ENCODE measurements at regions of chr2 and their contacts with region 1.

Region 1: DNA sequence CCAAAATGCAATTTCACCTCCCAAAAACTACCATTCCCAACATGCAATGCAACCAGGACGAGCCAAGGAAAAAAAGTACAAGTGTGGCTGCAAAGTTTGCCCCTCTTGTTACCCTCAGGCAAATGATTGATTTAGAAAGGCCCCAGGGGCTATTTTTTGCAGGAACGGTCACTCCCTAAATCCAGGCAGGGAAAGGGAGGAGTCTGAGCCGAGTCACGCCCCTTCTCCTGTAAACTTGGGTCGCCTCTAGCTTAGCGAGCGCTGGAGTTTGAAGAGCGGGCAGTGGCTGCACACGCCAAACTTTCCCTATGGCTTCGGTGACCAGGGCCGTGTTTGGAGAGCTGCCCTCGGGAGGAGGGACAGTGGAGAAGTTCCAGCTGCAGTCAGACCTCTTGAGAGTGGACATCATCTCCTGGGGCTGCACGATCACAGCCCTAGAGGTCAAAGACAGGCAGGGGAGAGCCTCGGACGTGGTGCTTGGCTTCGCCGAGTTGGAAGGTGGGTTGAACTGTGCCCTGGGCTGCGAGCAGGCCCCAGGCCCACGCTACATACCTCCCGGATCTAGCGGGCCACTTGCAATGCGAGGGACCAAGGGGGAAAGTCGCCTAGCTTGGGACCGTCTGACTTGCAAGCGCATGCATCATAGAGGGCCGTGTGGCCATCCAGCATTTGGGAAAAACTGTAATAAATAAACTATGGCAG is at the start of gene GALM:
- DNase-seq: peak; percentile 17 to 76 (median 55)
- H3K4me3 ChIP-seq: peak within 1 kb of the TSS; percentile 88
- H3K4me3 Mint-ChIP-seq: peak within 1 kb of the TSS; percentile 82 to 95 (median 88)
- H3K27ac ChIP-seq: peak within 1 kb of the TSS; percentile 60
- H3K27ac Mint-ChIP-seq: peak within 1 kb of the TSS; percentile 91 to 100 (median 99)
- H3K4me1 ChIP-seq: peaks cover 37% of the 10 kb centered on the region
- H3K4me1 Mint-ChIP-seq: peaks cover 56 to 69% (median 66%) of the 10 kb centered on the region in 3 donors
- H3K27me3 ChIP-seq: no peaks in the 10 kb centered on the region
- H3K27me3 Mint-ChIP-seq: no peaks in the 10 kb centered on the region
- total RNA-seq, gene GALM: 107 to 109 TPM

Region 2: GRCh38 chr2:38653715-38654527 is 12.1 kb before region 1 on chr2:
- CTCF ChIA-PET with region 1: interaction called, 18 read pairs
- POLR2A ChIA-PET with region 1: interaction called, 13 read pairs
- DNase-seq: peak in 4 of 5 donors; percentile 25 to 65 (median 34)
- H3K4me3 ChIP-seq: peak overlapping the region; percentile 13
- H3K4me3 Mint-ChIP-seq: peak overlapping the region; percentile 1 to 87 (median 70)
- H3K27ac ChIP-seq: peak overlapping the region; percentile 20
- H3K27ac Mint-ChIP-seq: peak overlapping the region; percentile 85 to 98 (median 94)
- H3K4me1 ChIP-seq: peaks cover 29% of the 10 kb centered on the region
- H3K4me1 Mint-ChIP-seq: peaks cover 30 to 59% (median 51%) of the 10 kb centered on the region in 3 donors
- H3K27me3 ChIP-seq: no peaks in the 10 kb centered on the region
- H3K27me3 Mint-ChIP-seq: no peaks in the 10 kb centered on the region

Region 3: GRCh38 chr2:38685116-38685735 is 19.2 kb after region 1 on chr2:
- CTCF ChIA-PET with region 1: interaction called, 16 read pairs
- POLR2A ChIA-PET with region 1: interaction called, 25 read pairs
- DNase-seq: no peak
- H3K4me3 ChIP-seq: no peak overlapping the region
- H3K4me3 Mint-ChIP-seq: peak overlapping the region in 6 of 7 donors; percentile 29 to 61 (median 46)
- H3K27ac ChIP-seq: no peak overlapping the region
- H3K27ac Mint-ChIP-seq: peak overlapping the region; percentile 61 to 97 (median 89)
- H3K4me1 ChIP-seq: peaks cover 30% of the 10 kb centered on the region
- H3K4me1 Mint-ChIP-seq: peaks cover 37 to 70% (median 69%) of the 10 kb centered on the region in 3 donors
- H3K27me3 ChIP-seq: no peaks in the 10 kb centered on the region
- H3K27me3 Mint-ChIP-seq: no peaks in the 10 kb centered on the region

Region 4: DNA sequence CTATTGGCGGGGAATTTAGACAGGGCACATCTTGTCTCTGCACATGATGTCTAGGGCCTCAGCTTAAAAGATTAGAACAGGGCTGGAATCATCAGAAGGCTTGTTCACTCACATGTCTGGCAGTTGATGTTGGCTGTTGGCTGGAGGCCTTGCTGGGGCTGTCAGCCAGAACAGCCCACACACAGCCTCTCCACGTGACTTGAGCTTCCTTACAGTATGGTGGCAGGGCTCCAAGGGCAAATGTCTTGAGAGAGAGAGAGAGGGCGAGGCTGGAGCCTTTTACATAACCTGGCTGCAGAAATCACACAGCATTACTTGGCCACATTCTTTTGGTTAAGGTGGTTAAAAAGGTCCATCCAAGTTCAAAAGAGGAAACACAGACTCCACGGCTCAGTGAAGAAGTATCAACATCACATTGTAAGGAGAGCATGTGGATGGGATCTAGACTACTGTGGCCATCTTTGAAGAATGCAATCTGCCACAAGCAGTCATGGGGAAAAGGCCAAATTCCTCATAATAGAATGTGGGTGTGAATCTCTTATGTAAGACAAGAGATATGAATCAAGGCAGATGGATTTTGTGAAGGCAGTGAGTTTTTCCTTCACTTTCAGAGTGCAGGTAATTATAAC is 54.7 kb after region 1 on chr2:
- CTCF ChIA-PET with region 1: interaction called, 11 read pairs
- POLR2A ChIA-PET with region 1: interaction called, 3 read pairs
- DNase-seq: no peak
- H3K4me3 ChIP-seq: no peak overlapping the region
- H3K4me3 Mint-ChIP-seq: peak overlapping the region in 3 of 7 donors; percentile 4 to 12 (median 6)
- H3K27ac ChIP-seq: no peak overlapping the region
- H3K27ac Mint-ChIP-seq: peak overlapping the region; percentile 65 to 94 (median 84)
- H3K4me1 ChIP-seq: peaks cover 19% of the 10 kb centered on the region
- H3K4me1 Mint-ChIP-seq: peaks cover 42 to 64% (median 58%) of the 10 kb centered on the region in 3 donors
- H3K27me3 ChIP-seq: no peaks in the 10 kb centered on the region
- H3K27me3 Mint-ChIP-seq: no peaks in the 10 kb centered on the region

Region 5: DNA sequence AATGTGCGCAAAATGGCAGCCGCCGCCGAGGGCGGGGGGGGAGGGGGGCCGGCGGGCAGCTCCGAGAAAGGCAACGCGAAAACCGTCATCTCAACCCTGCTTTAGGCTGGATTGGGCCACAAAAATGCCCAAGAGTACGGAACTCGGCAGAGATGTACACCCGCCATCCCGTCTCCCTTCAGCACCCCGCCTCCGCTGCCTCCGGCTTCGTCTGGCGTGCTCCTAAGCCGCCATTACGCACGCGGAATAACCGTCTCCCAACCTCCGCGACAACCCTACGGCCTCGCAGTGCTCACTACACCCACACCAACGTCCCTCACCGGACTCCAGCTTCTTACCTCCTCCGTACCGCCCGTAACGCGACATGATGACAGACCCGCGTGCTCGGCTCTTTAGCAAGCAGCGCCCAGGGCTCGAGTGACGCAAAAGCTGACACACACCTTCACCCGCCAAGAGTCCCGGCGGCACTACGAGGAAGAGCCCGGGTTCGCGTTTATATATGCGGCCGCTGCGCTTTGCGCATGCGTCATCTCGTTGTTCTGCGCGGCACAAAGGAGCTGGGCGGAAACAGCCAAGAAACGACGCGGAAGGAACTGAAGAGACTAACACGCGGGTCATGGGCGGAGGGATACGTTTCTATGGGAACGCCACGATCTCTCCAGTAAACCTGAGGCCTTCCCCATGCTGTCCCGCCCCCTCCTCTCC is 85.0 kb after region 1 on chr2 and contains the start of gene SRSF7:
- CTCF ChIA-PET with region 1: no interaction called
- POLR2A ChIA-PET with region 1: interaction called, 17 read pairs
- DNase-seq: peak; percentile 95 to 99 (median 96)
- H3K4me3 ChIP-seq: peak within 1 kb of the TSS; percentile 96
- H3K4me3 Mint-ChIP-seq: peak within 1 kb of the TSS; percentile 95 to 100 (median 99)
- H3K27ac ChIP-seq: peak within 1 kb of the TSS; percentile 98
- H3K27ac Mint-ChIP-seq: peak within 1 kb of the TSS; percentile 98 to 100 (median 100)
- H3K4me1 ChIP-seq: peaks cover 55% of the 10 kb centered on the region
- H3K4me1 Mint-ChIP-seq: peaks cover 61 to 67% (median 65%) of the 10 kb centered on the region in 3 donors
- H3K27me3 ChIP-seq: no peaks in the 10 kb centered on the region
- H3K27me3 Mint-ChIP-seq: peaks cover 0 to 18% of the 10 kb centered on the region in 2 donors
- total RNA-seq, gene SRSF7: 378 to 381 TPM

Measured in CD8-positive, alpha-beta memory T cell (primary cell).